GM12878 (cell line): ENCODE measurements at regions of chr11 and their contacts with region 1.

Region 1: GRCh38 chr11:73478738-73479347 is 102.6 kb downstream of the RELT start:
- DNase-seq: no peak
- ATAC-seq: peak; percentile 68
- H3K4me3 ChIP-seq: no peak overlapping the region
- H3K27ac ChIP-seq: no peak overlapping the region
- H3K4me1 ChIP-seq: no peaks in the 10 kb centered on the region
- H3K27me3 ChIP-seq: no peaks in the 10 kb centered on the region
- CTCF ChIP-seq: peak; percentile 52 to 76 (median 67)
- EP300 ChIP-seq: no peak
- POLR2A ChIP-seq: no peak
- RAD21 ChIP-seq: 0 out of 2 replicates have a peak, but pooled peaks have one; percentile 18

Region 2: GRCh38 chr11:73271936-73272719 is 206.7 kb before region 1 on chr11 and contains the start of gene P2RY6:
- CTCF ChIA-PET with region 1: no interaction called
- POLR2A ChIA-PET with region 1: no interaction called
- RAD21 ChIA-PET with region 1: no interaction called
- SMC1A ChIA-PET with region 1: no interaction called
- in situ Hi-C with region 1: no loop called
- intact Hi-C with region 1: no loop called
- DNase-seq: no peak
- ATAC-seq: peak; percentile 71
- H3K4me3 ChIP-seq: peak within 1 kb of the TSS; percentile 3; the same call in 1 of the 2 replicates
- H3K27ac ChIP-seq: no peak within 1 kb of the TSS; the same call in 1 of the 2 replicates
- H3K4me1 ChIP-seq: peaks cover 36% of the 10 kb centered on the region
- H3K27me3 ChIP-seq: no peaks in the 10 kb centered on the region; a peak in 1 of 4 replicates
- CTCF ChIP-seq: no peak
- EP300 ChIP-seq: no peak
- POLR2A ChIP-seq: no peak
- RAD21 ChIP-seq: no peak
- polyA plus RNA-seq, gene P2RY6: 0.05 TPM in 1 of 2 experiments, not detected in the other

Region 3: DNA sequence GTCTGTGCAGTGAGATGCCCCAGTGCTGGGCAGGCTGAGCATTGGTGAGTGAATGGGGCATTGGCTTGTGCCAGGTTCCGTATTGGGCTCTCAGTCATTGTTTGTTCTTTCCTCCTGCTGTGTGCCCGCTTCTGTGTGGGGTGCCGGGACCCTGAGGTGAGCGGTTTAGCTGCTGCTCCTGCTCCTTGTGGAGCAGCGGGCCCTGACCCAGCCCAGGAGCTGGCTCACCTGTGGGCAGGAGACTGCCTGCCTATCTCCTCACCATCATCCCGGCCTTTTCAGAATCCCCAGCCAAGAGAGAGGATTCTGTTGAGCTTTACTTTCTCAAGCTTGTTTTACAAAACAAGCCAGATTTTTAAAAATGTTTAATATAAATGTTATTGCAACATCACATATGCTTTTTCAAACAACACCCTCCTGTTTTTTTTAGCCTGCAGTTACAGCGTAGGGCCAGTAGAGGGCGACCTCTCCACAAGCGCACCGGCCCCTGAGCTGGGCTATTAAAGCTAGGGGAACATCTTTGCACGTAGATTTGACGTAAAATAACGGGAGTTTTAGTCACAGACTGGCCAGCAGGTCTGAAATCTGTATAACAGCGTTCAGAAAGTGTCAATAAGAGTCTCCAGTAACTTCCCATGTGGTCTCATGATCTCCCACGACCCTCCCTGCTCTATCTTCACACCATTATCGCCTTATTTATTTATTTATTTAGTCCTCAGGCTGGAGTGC is 127.8 kb before region 1 on chr11:
- CTCF ChIA-PET with region 1: interaction called, 11 read pairs
- POLR2A ChIA-PET with region 1: no interaction called
- RAD21 ChIA-PET with region 1: no interaction called
- SMC1A ChIA-PET with region 1: interaction called, 5 read pairs
- in situ Hi-C with region 1: no loop called
- intact Hi-C with region 1: no loop called
- DNase-seq: no peak
- ATAC-seq: peak; percentile 89
- H3K4me3 ChIP-seq: no peak overlapping the region
- H3K27ac ChIP-seq: no peak overlapping the region
- H3K4me1 ChIP-seq: no peaks in the 10 kb centered on the region
- H3K27me3 ChIP-seq: no peaks in the 10 kb centered on the region
- CTCF ChIP-seq: peak; percentile 94 to 99 (median 97)
- EP300 ChIP-seq: no peak
- POLR2A ChIP-seq: no peak
- RAD21 ChIP-seq: peak; percentile 96

Region 4: GRCh38 chr11:73463359-73463758 is 15.5 kb before region 1 on chr11:
- CTCF ChIA-PET with region 1: interaction called, 39 read pairs
- POLR2A ChIA-PET with region 1: interaction called, 3 read pairs
- RAD21 ChIA-PET with region 1: interaction called, 3 read pairs
- SMC1A ChIA-PET with region 1: interaction called, 29 read pairs
- in situ Hi-C with region 1: no loop called
- intact Hi-C with region 1: no loop called
- DNase-seq: no peak
- ATAC-seq: no peak
- H3K4me3 ChIP-seq: no peak overlapping the region
- H3K27ac ChIP-seq: no peak overlapping the region
- H3K4me1 ChIP-seq: no peaks in the 10 kb centered on the region
- H3K27me3 ChIP-seq: no peaks in the 10 kb centered on the region
- CTCF ChIP-seq: no peak
- EP300 ChIP-seq: no peak
- POLR2A ChIP-seq: no peak
- RAD21 ChIP-seq: no peak

Region 5: GRCh38 chr11:73513707-73514106 is 34.9 kb after region 1 on chr11:
- CTCF ChIA-PET with region 1: interaction called, 12 read pairs
- POLR2A ChIA-PET with region 1: no interaction called
- RAD21 ChIA-PET with region 1: no interaction called
- SMC1A ChIA-PET with region 1: interaction called, 19 read pairs
- in situ Hi-C with region 1: no loop called
- intact Hi-C with region 1: no loop called
- DNase-seq: no peak
- ATAC-seq: no peak
- H3K4me3 ChIP-seq: no peak overlapping the region
- H3K27ac ChIP-seq: no peak overlapping the region
- H3K4me1 ChIP-seq: no peaks in the 10 kb centered on the region; the same call in 1 of the 2 replicates
- H3K27me3 ChIP-seq: no peaks in the 10 kb centered on the region
- CTCF ChIP-seq: no peak
- EP300 ChIP-seq: no peak
- POLR2A ChIP-seq: no peak
- RAD21 ChIP-seq: no peak

Region 6: DNA sequence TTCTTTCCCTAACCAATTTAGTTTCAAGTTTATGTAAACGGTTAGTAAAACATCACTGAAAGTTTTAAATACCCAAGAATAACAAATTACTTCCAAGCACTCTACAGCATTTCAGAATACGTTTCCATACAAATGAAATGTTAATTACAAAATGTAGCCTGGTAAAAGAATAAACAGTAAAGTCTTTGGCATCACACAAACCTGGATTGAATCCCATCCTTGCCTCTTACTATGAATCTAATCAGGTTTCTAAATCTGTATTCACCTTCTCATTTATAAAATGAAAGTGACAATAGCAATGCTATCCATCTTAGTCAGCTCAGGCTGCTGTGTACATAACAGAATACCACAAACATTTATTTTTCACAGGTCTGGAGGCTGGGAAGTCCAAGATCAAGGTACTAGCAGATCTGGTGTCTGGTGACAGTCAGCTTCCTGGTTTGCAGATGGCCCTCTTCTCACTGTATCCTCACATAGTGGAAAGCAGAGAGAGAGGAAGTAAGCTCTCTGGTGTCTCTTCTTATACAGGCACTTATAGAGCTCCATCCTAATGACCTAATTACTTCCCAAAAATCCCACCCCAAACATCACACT is 99.8 kb after region 1 on chr11:
- CTCF ChIA-PET with region 1: interaction called, 6 read pairs
- POLR2A ChIA-PET with region 1: no interaction called
- RAD21 ChIA-PET with region 1: interaction called, 6 read pairs
- SMC1A ChIA-PET with region 1: interaction called, 15 read pairs
- in situ Hi-C with region 1: no loop called
- intact Hi-C with region 1: no loop called
- DNase-seq: peak; percentile 37
- ATAC-seq: peak; percentile 89
- H3K4me3 ChIP-seq: no peak overlapping the region
- H3K27ac ChIP-seq: peak overlapping the region; percentile 54; the same call in 1 of the 2 replicates
- H3K4me1 ChIP-seq: peaks cover 20% of the 10 kb centered on the region
- H3K27me3 ChIP-seq: no peaks in the 10 kb centered on the region
- CTCF ChIP-seq: no peak
- EP300 ChIP-seq: no peak
- POLR2A ChIP-seq: no peak
- RAD21 ChIP-seq: no peak

Region 7: GRCh38 chr11:73625696-73626318 is 147.0 kb after region 1 on chr11:
- CTCF ChIA-PET with region 1: interaction called, 68 read pairs
- POLR2A ChIA-PET with region 1: no interaction called
- RAD21 ChIA-PET with region 1: interaction called, 20 read pairs
- SMC1A ChIA-PET with region 1: interaction called, 32 read pairs
- in situ Hi-C with region 1: no loop called
- intact Hi-C with region 1: no loop called
- DNase-seq: peak; percentile 23
- ATAC-seq: peak; percentile 98
- H3K4me3 ChIP-seq: no peak overlapping the region
- H3K27ac ChIP-seq: no peak overlapping the region
- H3K4me1 ChIP-seq: no peaks in the 10 kb centered on the region
- H3K27me3 ChIP-seq: no peaks in the 10 kb centered on the region
- CTCF ChIP-seq: peak; percentile 83 to 91 (median 84)
- EP300 ChIP-seq: no peak
- POLR2A ChIP-seq: no peak
- RAD21 ChIP-seq: peak; percentile 82